Activated CD4-positive, alpha-beta memory T cell treated with anti-CD3 and anti-CD28 coated beads for 36 hours (primary cell): ENCODE measurements at regions of chr12 and their contacts with region 1.

Region 1: GRCh38 chr12:53476769-53477209 is 22.5 kb downstream of the MAP3K12 start:
- DNase-seq: no peak
- H3K4me3 Mint-ChIP-seq: no peak overlapping the region
- H3K27ac Mint-ChIP-seq: peak overlapping the region; percentile 94
- H3K4me1 Mint-ChIP-seq: peaks cover 60% of the 10 kb centered on the region
- H3K27me3 Mint-ChIP-seq: no peaks in the 10 kb centered on the region

Region 2: DNA sequence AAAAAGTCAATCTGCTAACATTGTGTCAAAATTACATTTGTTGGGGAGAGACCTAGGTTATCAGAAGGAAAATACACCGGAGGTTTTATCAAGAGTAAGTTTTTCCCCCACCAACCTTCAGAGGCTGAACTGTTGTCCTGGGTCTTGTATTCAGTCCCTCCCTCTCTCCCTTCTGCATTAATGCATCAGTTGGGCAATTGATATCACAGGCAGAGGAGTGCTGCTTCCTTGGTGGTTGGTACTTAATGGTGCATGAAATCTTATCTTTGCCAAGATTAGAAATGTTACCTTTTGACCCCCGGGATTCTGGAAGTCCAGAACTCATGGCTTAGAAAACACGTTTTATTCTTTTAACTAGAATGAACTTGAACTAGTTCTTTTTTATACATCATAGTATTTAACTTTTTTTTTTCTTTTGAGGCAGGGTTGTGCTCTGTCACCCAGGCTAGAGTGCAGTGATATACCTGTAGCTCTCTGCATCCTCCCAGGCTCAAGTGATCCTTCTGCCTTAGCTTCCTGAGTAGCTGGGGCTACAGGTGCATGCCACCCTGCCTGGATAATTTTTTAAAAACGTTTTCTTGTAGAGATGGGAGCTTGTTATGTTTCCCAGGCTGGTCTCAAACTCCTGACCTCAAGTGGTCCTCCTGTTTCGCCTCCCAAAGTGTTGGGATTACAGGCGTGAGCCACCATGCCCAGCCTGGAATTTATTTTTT is 20.0 kb before region 1 on chr12:
- CTCF ChIA-PET with region 1: interaction called, 4 read pairs
- POLR2A ChIA-PET with region 1: interaction called, 53 read pairs
- intact Hi-C with region 1: loop called (anchors 2 kb)
- DNase-seq: no peak
- H3K4me3 Mint-ChIP-seq: no peak overlapping the region
- H3K27ac Mint-ChIP-seq: no peak overlapping the region
- H3K4me1 Mint-ChIP-seq: peaks cover 40% of the 10 kb centered on the region
- H3K27me3 Mint-ChIP-seq: no peaks in the 10 kb centered on the region

Region 3: GRCh38 chr12:53465679-53466078 is 11.1 kb before region 1 on chr12:
- CTCF ChIA-PET with region 1: interaction called, 8 read pairs
- POLR2A ChIA-PET with region 1: interaction called, 16 read pairs
- intact Hi-C with region 1: no loop called
- DNase-seq: no peak
- H3K4me3 Mint-ChIP-seq: no peak overlapping the region
- H3K27ac Mint-ChIP-seq: peak overlapping the region; percentile 40
- H3K4me1 Mint-ChIP-seq: peaks cover 32% of the 10 kb centered on the region
- H3K27me3 Mint-ChIP-seq: no peaks in the 10 kb centered on the region

Region 4: GRCh38 chr12:53770281-53770680 is 293.5 kb after region 1 on chr12:
- CTCF ChIA-PET with region 1: no interaction called
- POLR2A ChIA-PET with region 1: no interaction called
- intact Hi-C with region 1: no loop called
- DNase-seq: no peak
- H3K4me3 Mint-ChIP-seq: no peak overlapping the region
- H3K27ac Mint-ChIP-seq: no peak overlapping the region
- H3K4me1 Mint-ChIP-seq: no peaks in the 10 kb centered on the region
- H3K27me3 Mint-ChIP-seq: peaks cover 34% of the 10 kb centered on the region